Activated naive CD4-positive, alpha-beta T cell treated with anti-CD3 and anti-CD28 coated beads, Interleukin-2, amount 10 ng/mL, durations not matched to agents 7 days and 5 days (primary cell): ENCODE measurements at regions of chr15 and their contacts with region 1.

Region 1: DNA sequence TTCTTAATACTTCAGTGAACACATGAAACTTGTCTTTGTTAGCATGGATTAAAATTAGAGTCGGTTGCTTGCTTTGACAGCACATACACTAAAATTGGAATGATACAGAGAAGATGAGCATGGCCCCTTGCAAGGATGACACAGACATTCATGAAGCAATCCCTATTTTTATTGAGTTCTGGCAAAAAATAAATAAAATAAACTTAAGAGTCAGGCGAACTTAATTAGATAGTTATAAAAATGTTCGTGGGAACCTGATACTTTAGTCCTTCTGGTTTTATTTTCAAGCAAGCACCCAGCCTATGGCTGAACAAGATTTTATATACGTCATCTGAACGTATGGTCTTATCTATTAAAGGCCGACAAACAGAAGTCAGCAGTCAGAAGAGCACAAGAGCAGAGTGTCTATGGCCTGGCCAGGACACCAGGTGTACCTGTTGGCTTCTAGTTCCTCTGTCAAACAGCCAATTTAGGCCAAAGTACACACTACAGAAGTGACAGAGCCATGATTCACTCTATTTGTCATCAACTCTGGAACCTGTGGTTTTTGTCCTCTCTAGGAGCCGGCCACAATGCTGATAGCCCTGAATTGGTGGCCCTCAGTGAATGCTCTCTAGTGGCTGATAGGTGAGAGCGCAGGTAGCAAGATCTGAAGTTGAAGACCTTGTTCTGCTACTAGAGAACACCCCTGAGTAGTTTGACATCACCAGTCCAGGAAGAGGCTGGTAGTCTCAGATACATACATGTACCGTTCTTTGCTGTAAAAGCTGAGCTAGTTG is 64.3 kb downstream of the LEO1 start:
- DNase-seq: no peak
- H3K4me3 Mint-ChIP-seq: no peak overlapping the region
- H3K27ac Mint-ChIP-seq: no peak overlapping the region
- H3K4me1 Mint-ChIP-seq: no peaks in the 10 kb centered on the region
- H3K27me3 Mint-ChIP-seq: no peaks in the 10 kb centered on the region

Region 2: GRCh38 chr15:51888593-51889195 is 18.6 kb before region 1 on chr15:
- CTCF ChIA-PET with region 1: interaction called, 21 read pairs
- DNase-seq: no peak
- H3K4me3 Mint-ChIP-seq: no peak overlapping the region
- H3K27ac Mint-ChIP-seq: no peak overlapping the region
- H3K4me1 Mint-ChIP-seq: no peaks in the 10 kb centered on the region
- H3K27me3 Mint-ChIP-seq: no peaks in the 10 kb centered on the region

Region 3: DNA sequence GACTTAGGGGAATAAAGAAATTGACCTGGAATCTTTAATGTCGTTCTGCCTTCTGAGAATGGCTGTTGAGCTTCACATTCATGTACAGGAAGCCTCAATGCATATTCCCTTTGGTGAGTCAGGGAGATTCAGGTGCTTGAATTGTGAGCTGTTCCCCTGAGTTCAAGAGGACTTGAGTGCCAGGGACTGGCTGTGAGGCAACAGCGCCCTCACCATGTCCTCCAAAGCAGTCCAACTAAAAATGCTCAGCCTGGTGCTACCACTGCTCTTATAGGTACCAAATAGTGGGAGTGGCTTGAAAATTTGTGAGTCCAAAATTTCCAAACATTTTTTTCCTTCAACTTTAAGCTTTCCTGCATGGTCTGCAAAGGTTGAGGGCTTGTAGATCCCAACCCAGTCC is 10.2 kb after region 1 on chr15:
- CTCF ChIA-PET with region 1: interaction called, 11 read pairs
- DNase-seq: peak; percentile 33
- H3K4me3 Mint-ChIP-seq: no peak overlapping the region
- H3K27ac Mint-ChIP-seq: peak overlapping the region; percentile 28
- H3K4me1 Mint-ChIP-seq: no peaks in the 10 kb centered on the region
- H3K27me3 Mint-ChIP-seq: no peaks in the 10 kb centered on the region

Region 4: DNA sequence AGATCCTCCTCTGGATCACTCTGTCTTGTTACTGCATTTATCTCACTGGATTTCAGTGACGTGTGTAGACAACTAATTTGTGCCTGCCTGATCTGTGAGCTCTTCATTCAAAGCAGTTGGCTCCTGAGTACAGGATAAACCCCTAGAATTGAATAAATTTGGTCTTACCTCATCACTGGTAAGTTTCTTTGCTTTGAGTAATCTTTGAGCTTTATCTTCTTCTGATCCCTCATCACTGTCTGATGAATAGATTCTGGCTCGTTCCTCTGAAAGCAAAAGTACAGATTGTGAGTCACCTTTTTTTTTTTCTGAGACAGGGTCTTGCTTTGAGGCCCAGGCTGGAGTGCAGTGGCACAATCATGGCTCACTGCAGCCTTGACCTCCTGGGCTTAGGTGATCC is 39.8 kb after region 1 on chr15:
- CTCF ChIA-PET with region 1: no interaction called
- DNase-seq: no peak
- H3K4me3 Mint-ChIP-seq: no peak overlapping the region
- H3K27ac Mint-ChIP-seq: no peak overlapping the region
- H3K4me1 Mint-ChIP-seq: no peaks in the 10 kb centered on the region
- H3K27me3 Mint-ChIP-seq: no peaks in the 10 kb centered on the region

Region 5: GRCh38 chr15:52148403-52148802 is 241.1 kb after region 1 on chr15:
- CTCF ChIA-PET with region 1: no interaction called
- DNase-seq: no peak
- H3K4me3 Mint-ChIP-seq: no peak overlapping the region
- H3K27ac Mint-ChIP-seq: no peak overlapping the region
- H3K4me1 Mint-ChIP-seq: no peaks in the 10 kb centered on the region
- H3K27me3 Mint-ChIP-seq: no peaks in the 10 kb centered on the region